Gastrocnemius medialis (tissue), 4 donors: ENCODE measurements at regions of chr12 and their contacts with region 1.

Region 1: GRCh38 chr12:70049600-70050360 is 193.5 kb upstream of the CNOT2 start:
- DNase-seq: no peak
- ATAC-seq: no peak
- H3K4me3 ChIP-seq: no peak overlapping the region
- H3K27ac ChIP-seq: no peak overlapping the region
- H3K4me1 ChIP-seq: peaks cover 0 to 7% of the 10 kb centered on the region in 2 donors
- H3K27me3 ChIP-seq: no peaks in the 10 kb centered on the region
- CTCF ChIP-seq: no peak
- POLR2A ChIP-seq: no peak

Region 2: DNA sequence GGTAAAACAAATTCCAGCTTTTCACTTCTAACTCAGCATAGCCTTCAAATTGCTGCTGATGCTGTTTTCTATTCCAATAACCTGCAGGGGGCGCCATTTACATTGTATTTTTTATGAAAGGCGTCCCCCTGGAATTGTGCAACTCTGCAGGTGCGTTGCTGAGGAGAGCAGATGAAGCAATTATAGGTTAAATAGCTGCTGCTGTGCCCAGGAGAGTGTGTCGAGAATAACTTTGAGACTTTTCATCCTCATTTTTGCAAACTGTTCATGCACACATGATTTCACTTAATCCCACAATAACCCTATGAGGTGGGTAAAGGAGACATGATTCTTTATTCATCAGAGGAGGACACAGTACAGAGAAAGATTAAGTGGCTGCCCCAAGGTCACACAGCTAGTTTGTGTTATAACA is 149.1 kb before region 1 on chr12:
- in situ Hi-C with region 1: no loop called
- intact Hi-C with region 1: loop called (anchors 10 kb)
- DNase-seq: peak; percentile 47 to 58
- ATAC-seq: peak; percentile 41 to 79
- H3K4me3 ChIP-seq: no peak overlapping the region
- H3K27ac ChIP-seq: no peak overlapping the region
- H3K4me1 ChIP-seq: no peaks in the 10 kb centered on the region
- H3K27me3 ChIP-seq: no peaks in the 10 kb centered on the region
- CTCF ChIP-seq: peak; percentile 65 to 77 (median 75)
- POLR2A ChIP-seq: no peak